Mammary epithelial cell (primary cell): ENCODE measurements at regions of chr15 and their contacts with region 1.

Region 1: GRCh38 chr15:40454904-40455391 is 14.2 kb downstream of the BAHD1 start:
- DNase-seq: peak; percentile 58
- H3K4me3 ChIP-seq: no peak overlapping the region
- H3K27ac ChIP-seq: no peak overlapping the region
- H3K4me1 ChIP-seq: peaks cover 33% of the 10 kb centered on the region
- H3K27me3 ChIP-seq: no peaks in the 10 kb centered on the region
- CTCF ChIP-seq: no peak

Region 2: DNA sequence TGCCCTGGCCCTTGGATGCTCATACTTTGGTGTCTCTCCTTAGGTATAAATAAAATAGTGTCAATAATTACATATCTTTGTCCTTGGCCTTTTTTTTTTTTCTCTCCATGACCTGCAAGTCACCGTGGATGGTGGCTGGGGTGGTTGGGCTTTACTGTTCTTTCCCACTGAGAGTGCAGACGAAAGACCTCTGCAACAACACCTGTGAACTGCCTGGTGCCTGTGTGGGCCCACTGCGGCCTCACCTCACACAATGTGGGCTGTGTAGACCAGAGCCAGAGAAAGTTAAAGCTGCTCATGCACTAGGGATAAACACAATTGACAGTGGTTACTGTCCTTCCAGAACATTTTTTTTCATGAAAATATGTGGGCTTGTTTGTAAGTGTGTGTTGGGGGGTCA is 70.9 kb after region 1 on chr15:
- CTCF ChIA-PET with region 1: no interaction called
- dilution Hi-C with region 1: loop called (anchors 5 kb)
- in situ Hi-C with region 1: no loop called
- intact Hi-C with region 1: no loop called
- DNase-seq: no peak
- H3K4me3 ChIP-seq: no peak overlapping the region
- H3K27ac ChIP-seq: no peak overlapping the region
- H3K4me1 ChIP-seq: no peaks in the 10 kb centered on the region
- H3K27me3 ChIP-seq: no peaks in the 10 kb centered on the region
- CTCF ChIP-seq: no peak